ENCODE measurements at regions of chr7 and their contacts with region 1.

Region 1: GRCh38 chr7:32048970-32049491 is 21.2 kb downstream of the PDE1C start:
- DNase-seq: no peak
- ATAC-seq: no peak
- H3K4me3 ChIP-seq: no peak overlapping the region
- H3K27ac ChIP-seq: no peak overlapping the region
- H3K4me1 ChIP-seq: peaks cover 44% of the 10 kb centered on the region
- H3K27me3 ChIP-seq: no peaks in the 10 kb centered on the region
- CTCF ChIP-seq: no peak

Region 2: DNA sequence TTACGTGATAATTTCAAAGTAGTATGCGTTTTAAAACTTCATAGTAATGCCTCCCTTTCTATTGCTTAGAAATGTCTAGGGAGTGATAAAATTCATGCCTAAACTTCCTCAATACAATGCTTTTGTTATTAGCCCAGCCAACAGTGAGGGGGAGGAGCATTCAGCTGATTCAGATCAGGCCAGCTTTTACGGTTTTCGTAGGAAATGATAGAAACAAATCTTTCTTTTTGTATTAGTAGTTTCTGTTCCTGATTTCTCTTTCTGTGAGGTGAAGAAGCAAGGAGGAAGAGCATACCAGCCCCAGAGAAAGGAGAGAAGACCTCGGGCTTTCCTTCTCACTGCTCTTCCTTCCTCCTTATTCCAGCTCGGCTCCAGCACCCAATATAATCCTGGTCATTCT is 570.3 kb before region 1 on chr7:
- CTCF ChIA-PET with region 1: no interaction called
- POLR2A ChIA-PET with region 1: no interaction called
- intact Hi-C with region 1: no loop called
- DNase-seq: no peak
- ATAC-seq: no peak
- H3K4me3 ChIP-seq: no peak overlapping the region
- H3K27ac ChIP-seq: no peak overlapping the region
- H3K4me1 ChIP-seq: no peaks in the 10 kb centered on the region
- H3K27me3 ChIP-seq: peaks cover 62% of the 10 kb centered on the region
- CTCF ChIP-seq: no peak

Region 3: DNA sequence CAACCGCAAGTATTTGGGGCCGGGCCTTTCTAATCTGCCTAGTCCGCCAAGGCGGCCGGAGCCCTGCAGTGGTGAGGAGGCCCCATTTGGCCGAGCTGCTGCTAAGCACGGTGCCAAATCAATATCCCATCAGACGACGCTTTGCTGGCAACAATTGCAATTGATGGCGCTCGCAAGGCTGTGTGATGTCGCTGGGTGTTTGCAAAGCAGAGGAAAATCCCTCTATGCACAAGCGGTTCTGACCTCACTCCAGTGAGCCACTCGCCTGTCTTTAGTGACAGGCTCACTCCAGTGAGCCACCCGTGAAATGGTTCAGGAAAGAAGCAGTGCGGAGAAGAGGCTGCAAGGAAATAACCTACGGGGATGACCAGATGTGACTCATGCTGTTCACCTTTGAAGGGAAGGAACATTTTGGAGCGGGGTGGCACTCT is 39.4 kb after region 1 on chr7:
- CTCF ChIA-PET with region 1: no interaction called
- POLR2A ChIA-PET with region 1: interaction called, 3 read pairs
- intact Hi-C with region 1: loop called (anchors 1 kb)
- DNase-seq: peak; percentile 72
- ATAC-seq: peak; percentile 39
- H3K4me3 ChIP-seq: no peak overlapping the region
- H3K27ac ChIP-seq: peak overlapping the region; percentile 54
- H3K4me1 ChIP-seq: peaks cover 31% of the 10 kb centered on the region
- H3K27me3 ChIP-seq: no peaks in the 10 kb centered on the region
- CTCF ChIP-seq: no peak

Region 4: GRCh38 chr7:32108651-32109050 is 59.6 kb after region 1 on chr7:
- CTCF ChIA-PET with region 1: no interaction called
- POLR2A ChIA-PET with region 1: no interaction called
- intact Hi-C with region 1: loop called (anchors 5 kb)
- DNase-seq: peak; percentile 97
- ATAC-seq: peak; percentile 98
- H3K4me3 ChIP-seq: no peak overlapping the region
- H3K27ac ChIP-seq: peak overlapping the region; percentile 79
- H3K4me1 ChIP-seq: peaks cover 20% of the 10 kb centered on the region
- H3K27me3 ChIP-seq: no peaks in the 10 kb centered on the region
- CTCF ChIP-seq: no peak